GM18951 (cell line): ENCODE measurements at regions of chr6 and their contacts with region 1.

Region 1: GRCh38 chr6:117555882-117556498 is 46.3 kb downstream of the GOPC start:
- POLR2A ChIP-seq: no peak

Region 2: DNA sequence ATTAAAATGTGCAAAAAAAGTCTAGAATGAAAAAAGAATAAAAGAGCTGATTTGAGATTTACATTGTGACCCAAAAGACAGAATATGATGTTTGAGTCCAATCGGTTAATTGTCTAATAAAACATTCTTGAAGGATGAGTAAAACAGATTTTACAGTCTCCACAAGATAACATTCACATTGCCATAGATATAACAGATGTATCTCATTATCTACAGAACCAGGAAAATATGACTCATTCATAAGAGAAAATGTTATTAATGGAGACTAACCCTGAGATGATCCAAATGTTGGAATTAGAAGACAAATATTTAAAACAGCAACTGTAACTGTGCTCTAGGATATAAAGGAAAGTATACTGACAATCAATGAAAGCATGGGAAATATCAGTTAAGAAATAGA is 537.2 kb before region 1 on chr6:
- in situ Hi-C with region 1: no loop called
- POLR2A ChIP-seq: no peak

Region 3: GRCh38 chr6:117346142-117346930 is 209.7 kb before region 1 on chr6:
- in situ Hi-C with region 1: loop called (anchors 25 kb)
- POLR2A ChIP-seq: no peak

Region 4: GRCh38 chr6:117449549-117450439 is 106.2 kb before region 1 on chr6:
- in situ Hi-C with region 1: loop called (anchors 10 kb)
- POLR2A ChIP-seq: no peak